Dendritic cell treated with granulocyte-macrophage colony-stimulating factor and Interleukin-4, amounts not matched to agents 40 ng/mL and 50 ng/mL, for 4 days (primary cell): ENCODE measurements at regions of chr19 and their contacts with region 1.

Region 1: GRCh38 chr19:13277104-13277809 is 127.0 kb downstream of the IER2 start:
- H3K4me3 Mint-ChIP-seq: no peak overlapping the region
- H3K27ac Mint-ChIP-seq: no peak overlapping the region
- H3K4me1 Mint-ChIP-seq: no peaks in the 10 kb centered on the region
- H3K27me3 Mint-ChIP-seq: peaks cover 15% of the 10 kb centered on the region

Region 2: DNA sequence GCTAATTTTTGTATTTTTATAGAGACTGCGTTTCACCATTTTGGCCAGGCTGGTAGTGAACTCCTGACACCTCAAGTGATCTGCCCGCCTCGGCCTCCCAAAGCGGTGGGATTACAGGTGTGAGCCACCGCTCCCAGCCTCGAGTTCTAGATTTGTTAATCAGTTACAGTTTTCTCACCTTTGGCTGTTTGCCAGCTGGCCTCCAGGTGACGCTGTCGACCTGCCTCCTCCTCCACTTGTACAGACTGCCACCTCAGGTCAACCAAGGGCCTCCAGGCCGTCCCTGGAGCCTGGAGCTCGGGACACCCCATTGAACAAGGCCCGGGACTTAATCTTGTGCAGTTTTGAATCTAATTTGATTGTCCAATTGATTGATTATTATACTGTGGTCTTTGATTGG is 81.6 kb before region 1 on chr19:
- intact Hi-C with region 1: no loop called
- H3K4me3 Mint-ChIP-seq: no peak overlapping the region
- H3K27ac Mint-ChIP-seq: no peak overlapping the region
- H3K4me1 Mint-ChIP-seq: peaks cover 6% of the 10 kb centered on the region
- H3K27me3 Mint-ChIP-seq: no peaks in the 10 kb centered on the region

Region 3: DNA sequence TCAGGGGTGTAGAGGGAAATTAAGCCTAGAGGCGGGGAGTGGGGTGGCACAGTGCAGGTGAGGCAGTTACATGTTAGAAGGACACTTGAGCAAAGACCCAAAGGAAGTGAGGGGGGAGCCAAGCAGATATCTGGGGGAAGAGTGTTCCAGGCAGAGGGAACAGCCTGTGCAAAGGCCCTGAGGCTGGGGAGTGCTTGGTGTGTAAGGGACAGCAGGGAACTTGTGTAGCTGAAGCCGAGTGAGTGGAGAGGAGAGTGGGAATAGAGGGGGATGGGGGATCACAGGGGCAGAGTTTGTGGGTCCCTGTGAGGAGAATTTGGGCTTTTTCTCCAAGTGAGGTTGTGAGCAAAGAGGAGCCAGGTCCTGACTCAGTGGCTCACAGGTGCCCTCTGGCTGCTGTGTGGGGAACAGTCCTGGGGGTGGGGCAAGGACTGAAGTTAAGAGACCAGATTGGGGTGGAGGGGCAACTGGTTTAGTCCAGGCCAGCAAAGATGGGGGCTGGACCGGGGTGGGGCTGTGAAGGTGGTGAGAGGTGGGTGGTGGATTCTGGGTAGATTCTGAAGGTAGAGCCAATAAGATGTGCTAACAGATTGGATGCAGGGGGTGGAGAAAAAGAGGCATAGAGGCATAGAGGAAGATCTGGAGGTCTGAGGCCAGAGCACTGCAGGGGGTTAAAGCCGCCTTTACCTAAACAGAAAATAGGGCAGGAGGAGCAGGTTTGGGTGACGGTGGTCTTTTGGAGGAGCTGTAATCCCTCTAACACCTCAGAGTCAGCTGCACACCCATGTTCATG is 153.7 kb after region 1 on chr19:
- intact Hi-C with region 1: loop called (anchors 1 kb)
- H3K4me3 Mint-ChIP-seq: no peak overlapping the region
- H3K27ac Mint-ChIP-seq: no peak overlapping the region
- H3K4me1 Mint-ChIP-seq: no peaks in the 10 kb centered on the region
- H3K27me3 Mint-ChIP-seq: peaks cover 8% of the 10 kb centered on the region

Region 4: GRCh38 chr19:13588957-13589833 is 311.9 kb after region 1 on chr19:
- intact Hi-C with region 1: loop called (anchors 1 kb)
- H3K4me3 Mint-ChIP-seq: no peak overlapping the region
- H3K27ac Mint-ChIP-seq: no peak overlapping the region
- H3K4me1 Mint-ChIP-seq: no peaks in the 10 kb centered on the region
- H3K27me3 Mint-ChIP-seq: peaks cover 17% of the 10 kb centered on the region